ENCODE measurements at regions of chr18 and their contacts with region 1.

Region 1: DNA sequence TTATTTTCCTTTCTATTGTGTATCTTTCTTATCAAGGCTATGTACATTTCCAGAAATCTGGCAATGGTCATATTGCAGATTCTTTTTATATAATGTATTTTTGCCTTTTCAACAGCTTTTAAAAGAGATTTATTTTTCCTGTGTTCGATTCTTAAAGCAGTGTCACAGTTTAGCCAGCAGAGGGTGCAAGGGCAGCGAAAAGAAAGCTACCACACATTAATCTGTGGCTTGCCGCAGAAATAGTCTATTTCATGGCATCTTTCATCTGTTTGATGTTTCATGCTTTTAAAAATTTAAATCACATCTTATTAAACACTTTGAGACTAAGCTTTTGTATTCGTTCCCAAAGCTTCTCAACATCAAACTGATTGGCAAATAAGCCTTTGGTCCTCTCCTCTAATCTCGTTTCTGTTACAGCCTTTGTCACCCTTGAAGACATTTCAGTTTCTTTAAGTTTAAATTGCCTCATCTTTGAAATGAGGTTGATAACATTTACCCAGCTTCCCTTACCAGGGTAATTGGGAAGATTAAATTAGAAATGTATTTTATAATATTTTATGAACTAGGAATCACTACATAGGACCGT is 73.3 kb downstream of the PIK3C3 start:
- DNase-seq: peak; percentile 47
- H3K4me3 Mint-ChIP-seq: no peak overlapping the region
- H3K27ac Mint-ChIP-seq: no peak overlapping the region
- H3K4me1 Mint-ChIP-seq: peaks cover 23% of the 10 kb centered on the region
- H3K27me3 Mint-ChIP-seq: no peaks in the 10 kb centered on the region

Region 2: DNA sequence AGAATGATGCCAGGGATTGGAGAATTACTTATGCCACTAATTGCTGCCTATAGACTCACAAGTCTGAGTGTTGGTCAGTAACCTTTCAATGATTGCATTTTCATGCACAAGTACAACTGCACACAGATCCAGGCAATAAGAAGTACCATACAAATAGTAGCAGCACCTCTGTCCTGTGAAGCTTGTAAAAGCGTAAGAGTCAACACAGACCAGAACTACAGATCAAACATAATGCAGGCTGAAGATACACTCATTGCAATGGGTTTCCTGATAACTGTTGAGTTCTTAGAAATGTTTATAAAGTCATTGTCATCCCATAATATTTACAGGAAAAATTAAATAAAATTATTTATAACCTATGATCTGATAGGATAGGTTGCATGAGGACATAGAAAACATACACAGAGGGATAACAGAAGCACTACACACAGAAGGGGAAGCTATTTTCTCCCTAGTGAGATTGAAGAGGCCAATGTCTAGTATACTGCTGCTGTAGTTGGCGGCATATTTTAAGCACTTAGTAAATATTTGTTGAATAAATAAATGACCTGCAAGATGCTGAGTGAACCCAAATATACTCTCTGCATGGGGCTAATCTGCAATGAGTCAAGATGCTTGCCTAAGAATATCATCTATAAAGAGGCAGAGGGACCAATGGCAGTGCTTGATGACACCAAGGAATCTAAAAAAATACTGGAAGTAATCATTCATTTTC is 79.0 kb before region 1 on chr18:
- CTCF ChIA-PET with region 1: no interaction called
- intact Hi-C with region 1: loop called (anchors 2 kb)
- DNase-seq: no peak
- H3K4me3 Mint-ChIP-seq: no peak overlapping the region
- H3K27ac Mint-ChIP-seq: no peak overlapping the region
- H3K4me1 Mint-ChIP-seq: peaks cover 17% of the 10 kb centered on the region
- H3K27me3 Mint-ChIP-seq: peaks cover 11% of the 10 kb centered on the region

Region 3: DNA sequence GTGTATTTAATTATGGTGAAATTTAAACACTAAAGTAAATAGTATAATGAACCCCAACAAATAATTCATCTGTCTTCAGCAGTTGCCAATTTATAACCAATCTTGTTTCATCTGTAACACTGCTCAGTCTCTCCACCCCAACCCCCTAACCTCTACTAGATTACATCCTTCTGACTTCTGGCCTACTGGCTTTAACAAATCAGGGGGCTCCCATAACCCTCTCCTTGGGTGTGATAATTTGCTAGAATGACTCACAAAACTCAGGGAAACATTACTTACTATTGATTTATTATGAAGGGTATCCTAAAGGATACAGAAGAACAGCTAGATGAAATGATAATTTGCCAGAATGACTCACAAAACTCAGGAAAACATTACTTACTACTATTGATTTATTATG is 22.6 kb before region 1 on chr18:
- CTCF ChIA-PET with region 1: no interaction called
- intact Hi-C with region 1: no loop called
- DNase-seq: no peak
- H3K4me3 Mint-ChIP-seq: no peak overlapping the region
- H3K27ac Mint-ChIP-seq: no peak overlapping the region
- H3K4me1 Mint-ChIP-seq: peaks cover 6% of the 10 kb centered on the region
- H3K27me3 Mint-ChIP-seq: no peaks in the 10 kb centered on the region

Region 4: DNA sequence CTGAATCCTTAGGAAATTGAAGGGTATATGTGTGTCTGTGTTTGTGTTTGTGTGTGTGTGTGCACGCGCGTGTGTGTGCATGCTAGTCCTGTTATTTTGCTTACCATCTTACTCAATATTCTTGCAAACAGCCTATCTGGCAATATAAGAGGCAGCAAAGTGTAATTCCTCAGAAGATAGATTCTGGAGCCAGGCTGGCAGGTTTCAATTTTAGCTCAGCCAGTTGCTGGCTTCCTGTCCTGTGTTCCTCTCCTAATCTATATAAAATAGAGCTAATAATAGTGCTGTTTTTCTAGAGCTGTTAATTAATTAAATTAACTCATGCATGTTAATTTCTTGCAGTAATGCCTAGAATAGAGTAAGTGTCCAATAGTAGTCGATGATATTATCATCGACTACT is 182.9 kb after region 1 on chr18:
- CTCF ChIA-PET with region 1: no interaction called
- intact Hi-C with region 1: no loop called
- DNase-seq: no peak
- H3K4me3 Mint-ChIP-seq: no peak overlapping the region
- H3K27ac Mint-ChIP-seq: no peak overlapping the region
- H3K4me1 Mint-ChIP-seq: no peaks in the 10 kb centered on the region
- H3K27me3 Mint-ChIP-seq: no peaks in the 10 kb centered on the region

Measured in activated naive CD4-positive, alpha-beta T cell treated with anti-CD3 and anti-CD28 coated beads for 36 hours (primary cell).